Right cardiac atrium (tissue), 5 donors: ENCODE measurements at regions of chr19 and their contacts with region 1.

Region 1: GRCh38 chr19:2543463-2544442 is 67.8 kb downstream of the GADD45B start:
- DNase-seq: peak; percentile 96 to 97 (median 97)
- ATAC-seq: peak; percentile 87 to 89
- H3K4me3 ChIP-seq: no peak overlapping the region
- H3K27ac ChIP-seq: peak overlapping the region; percentile 97
- H3K4me1 ChIP-seq: peaks cover 27% of the 10 kb centered on the region
- H3K27me3 ChIP-seq: no peaks in the 10 kb centered on the region

Region 2: DNA sequence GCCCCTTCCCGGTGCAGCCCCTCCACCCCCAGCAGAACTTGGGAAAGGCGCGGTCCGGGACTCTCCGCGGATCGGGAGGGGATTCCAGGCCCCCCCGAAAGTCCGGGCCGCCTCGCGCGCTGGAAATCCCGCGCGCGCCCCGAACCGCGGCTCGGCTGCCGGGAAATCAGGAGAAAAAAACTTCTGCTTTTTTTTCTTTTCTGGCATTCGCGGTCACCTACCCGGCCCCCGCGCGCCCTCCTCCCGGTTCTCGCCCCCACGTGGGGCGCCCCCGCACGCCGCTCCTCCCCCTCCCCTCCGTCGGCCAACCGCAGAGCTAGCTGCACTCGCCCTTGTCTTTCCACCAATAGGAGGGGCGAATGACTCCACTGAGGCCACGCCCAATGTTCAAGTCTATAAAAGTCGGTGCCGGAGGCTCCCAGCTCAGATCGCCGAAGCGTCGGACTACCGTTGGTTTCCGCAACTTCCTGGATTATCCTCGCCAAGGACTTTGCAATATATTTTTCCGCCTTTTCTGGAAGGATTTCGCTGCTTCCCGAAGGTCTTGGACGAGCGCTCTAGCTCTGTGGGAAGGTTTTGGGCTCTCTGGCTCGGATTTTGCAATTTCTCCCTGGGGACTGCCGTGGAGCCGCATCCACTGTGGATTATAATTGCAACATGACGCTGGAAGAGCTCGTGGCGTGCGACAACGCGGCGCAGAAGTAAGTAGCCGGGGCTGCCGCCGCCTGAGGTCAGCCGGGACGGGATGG is 67.9 kb before region 1 on chr19 and contains the start of gene GADD45B:
- intact Hi-C with region 1: loop called (anchors 2 to 5 kb)
- DNase-seq: peak; percentile 98 to 99 (median 99)
- ATAC-seq: peak; percentile 82 to 83
- H3K4me3 ChIP-seq: peak within 1 kb of the TSS; percentile 84
- H3K27ac ChIP-seq: peak within 1 kb of the TSS; percentile 97
- H3K4me1 ChIP-seq: no peaks in the 10 kb centered on the region
- H3K27me3 ChIP-seq: no peaks in the 10 kb centered on the region
- total RNA-seq, gene GADD45B: 52.4 to 205 (median 78.9) TPM

Region 3: GRCh38 chr19:2494444-2495129 is 49.2 kb before region 1 on chr19:
- intact Hi-C with region 1: loop called in 2 of 4 experiments (anchors 5 kb)
- DNase-seq: peak; percentile 94 to 95 (median 94)
- ATAC-seq: peak; percentile 84 to 90
- H3K4me3 ChIP-seq: peak overlapping the region; percentile 50
- H3K27ac ChIP-seq: peak overlapping the region; percentile 90
- H3K4me1 ChIP-seq: peaks cover 5% of the 10 kb centered on the region
- H3K27me3 ChIP-seq: no peaks in the 10 kb centered on the region

Region 4: GRCh38 chr19:2578901-2579677 is 35.3 kb after region 1 on chr19:
- intact Hi-C with region 1: loop called in 3 of 4 experiments (anchors 5 kb)
- DNase-seq: peak; percentile 92 to 97 (median 96)
- ATAC-seq: peak; percentile 89
- H3K4me3 ChIP-seq: peak overlapping the region; percentile 1
- H3K27ac ChIP-seq: peak overlapping the region; percentile 97
- H3K4me1 ChIP-seq: peaks cover 12% of the 10 kb centered on the region
- H3K27me3 ChIP-seq: no peaks in the 10 kb centered on the region